Motor neuron (in vitro differentiated cells): ENCODE measurements at regions of chr3 and their contacts with region 1.

Region 1: GRCh38 chr3:192444096-192444790 is 283.1 kb downstream of the FGF12 start:
- ATAC-seq: peak; percentile 68 to 92 (median 87)
- H3K4me3 ChIP-seq: no peak overlapping the region
- H3K27ac ChIP-seq: no peak overlapping the region
- H3K4me1 ChIP-seq: peaks cover 21 to 26% of the 10 kb centered on the region in 2 donors

Region 2: DNA sequence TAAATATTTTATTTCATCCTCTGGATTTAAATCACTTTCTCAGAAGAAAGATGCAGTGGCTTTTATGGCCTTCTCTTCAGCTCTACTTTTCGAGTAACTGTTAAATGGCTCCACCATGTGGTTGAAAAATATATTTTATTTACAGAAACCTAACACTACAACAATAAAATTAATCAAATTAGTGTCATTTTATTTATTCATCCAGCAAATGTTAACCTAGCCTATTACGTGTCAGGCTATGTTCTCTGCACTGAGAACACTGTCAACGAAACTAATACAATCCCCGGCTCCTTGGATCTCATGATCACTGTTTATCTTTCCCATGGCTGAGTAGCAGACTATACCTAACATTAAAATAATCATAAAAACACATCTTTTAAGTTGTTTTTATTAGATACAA is 1393.2 kb before region 1 on chr3:
- in situ Hi-C with region 1: no loop called
- ATAC-seq: peak; percentile 33 to 71 (median 48)
- H3K4me3 ChIP-seq: no peak overlapping the region
- H3K27ac ChIP-seq: no peak overlapping the region
- H3K4me1 ChIP-seq: no peaks in the 10 kb centered on the region

Region 3: GRCh38 chr3:191869738-191870415 is 574.4 kb before region 1 on chr3:
- in situ Hi-C with region 1: loop called in 1 of 9 experiments (anchors 25 kb)
- ATAC-seq: no peak
- H3K4me3 ChIP-seq: no peak overlapping the region
- H3K27ac ChIP-seq: no peak overlapping the region
- H3K4me1 ChIP-seq: peaks cover 2 to 13% of the 10 kb centered on the region in 2 donors

Region 4: DNA sequence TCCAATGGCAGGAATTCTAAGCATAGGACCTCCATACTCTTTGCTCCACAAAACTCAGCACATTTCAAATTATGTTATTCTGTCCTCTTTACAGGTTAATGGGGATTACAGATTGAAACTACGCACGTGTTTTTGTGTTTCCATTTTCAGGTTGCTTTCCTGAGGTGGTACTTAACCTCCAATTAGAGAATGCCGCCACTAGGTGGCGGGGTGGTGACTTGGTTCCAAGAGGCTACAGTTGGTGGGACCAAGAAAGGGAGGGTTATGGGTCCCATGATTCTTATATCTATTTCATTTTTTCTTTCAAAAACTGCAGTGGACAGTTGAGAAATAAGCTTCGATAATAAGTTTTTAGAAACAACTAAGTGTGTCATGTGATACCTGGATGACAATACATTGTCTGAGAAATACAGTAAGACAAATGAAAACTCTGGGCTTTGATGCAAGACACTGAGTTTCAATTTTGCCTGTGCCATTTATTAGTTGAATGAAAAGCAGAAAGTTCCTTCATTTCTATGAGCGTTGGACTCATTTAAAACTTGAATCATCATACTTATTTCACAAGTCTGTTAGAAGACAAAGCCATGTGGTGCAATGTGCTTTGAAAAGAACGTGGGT is 255.9 kb before region 1 on chr3:
- in situ Hi-C with region 1: loop called in 1 of 9 experiments (anchors 25 kb)
- ATAC-seq: peak in 3 of 8 experiments; percentile 80 to 81 (median 80)
- H3K4me3 ChIP-seq: no peak overlapping the region
- H3K27ac ChIP-seq: no peak overlapping the region
- H3K4me1 ChIP-seq: peaks cover 0 to 16% of the 10 kb centered on the region in 2 donors

Region 5: DNA sequence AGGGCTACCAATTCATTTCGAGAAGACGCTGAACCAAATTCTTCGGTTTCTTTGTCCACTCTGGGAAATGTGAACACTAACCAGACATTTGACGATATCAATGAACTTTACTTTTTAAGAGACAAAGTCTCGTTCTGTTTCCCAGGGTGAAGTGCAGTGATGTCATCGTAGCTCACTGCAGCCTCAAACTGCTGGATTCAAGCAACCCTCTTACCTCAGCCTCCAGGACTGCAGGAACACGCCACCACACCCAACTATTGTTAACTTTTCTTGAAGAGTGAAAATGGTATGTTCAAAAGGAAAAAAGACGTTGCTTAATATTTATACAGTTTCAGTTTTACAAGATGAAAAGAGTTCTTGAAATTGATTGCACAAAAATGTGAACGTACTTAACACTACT is 442.8 kb after region 1 on chr3:
- in situ Hi-C with region 1: no loop called
- ATAC-seq: peak in 2 of 8 experiments; percentile 57 to 60
- H3K4me3 ChIP-seq: no peak overlapping the region
- H3K27ac ChIP-seq: no peak overlapping the region
- H3K4me1 ChIP-seq: peaks cover 9 to 21% of the 10 kb centered on the region in 2 donors